ENCODE measurements at regions of chr2 and their contacts with region 1.

Region 1: DNA sequence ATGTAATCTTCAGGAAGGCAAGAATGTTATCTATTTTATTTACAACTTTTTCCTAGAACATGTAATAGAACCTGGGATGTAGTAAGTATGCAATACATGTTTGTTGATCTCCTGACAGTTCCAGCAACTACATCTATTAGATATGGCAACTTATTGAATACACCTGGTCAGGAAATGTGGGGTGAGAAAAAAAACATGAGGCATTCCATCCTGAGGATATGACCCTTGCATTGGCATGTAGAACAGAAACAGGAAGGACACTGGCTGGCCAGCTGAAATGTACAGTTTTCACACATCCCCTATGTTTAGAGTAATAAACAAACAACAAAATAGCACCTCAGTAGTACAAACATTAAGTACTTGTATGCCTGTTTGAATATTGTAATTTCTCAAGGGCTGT is 272.6 kb upstream of the NT5C1B start:
- DNase-seq: no peak
- ATAC-seq: no peak
- H3K4me3 ChIP-seq: no peak overlapping the region
- H3K27ac ChIP-seq: no peak overlapping the region
- H3K4me1 ChIP-seq: no peaks in the 10 kb centered on the region
- H3K27me3 ChIP-seq: no peaks in the 10 kb centered on the region
- CTCF ChIP-seq: no peak

Region 2: DNA sequence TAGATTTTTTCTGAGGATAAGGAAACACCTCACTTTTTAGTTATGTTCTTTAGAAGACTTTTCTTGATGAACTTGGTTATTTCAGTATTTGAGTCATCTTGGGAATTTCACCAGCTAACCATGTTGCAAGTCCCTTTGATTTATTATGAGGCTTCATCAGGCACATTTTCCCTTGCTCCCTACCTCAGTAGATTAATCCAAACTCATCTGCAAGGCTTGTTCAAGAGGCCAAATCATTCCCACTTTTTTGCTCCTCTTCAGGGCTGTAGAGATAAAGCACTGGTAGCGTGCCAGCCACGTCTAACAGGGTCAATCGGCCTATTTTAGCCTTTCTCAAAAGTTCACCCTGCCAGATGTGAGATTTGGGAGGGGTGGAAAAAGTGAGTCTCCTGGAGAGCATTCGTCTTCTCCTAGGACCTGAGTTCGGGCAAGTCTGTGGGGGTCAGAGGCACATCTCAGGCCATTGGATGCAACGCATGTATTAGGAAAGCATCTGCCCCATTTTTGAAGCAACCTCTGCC is 421.8 kb before region 1 on chr2:
- intact Hi-C with region 1: no loop called
- DNase-seq: no peak
- ATAC-seq: no peak
- H3K4me3 ChIP-seq: no peak overlapping the region
- H3K27ac ChIP-seq: no peak overlapping the region
- H3K4me1 ChIP-seq: peaks cover 0 to 13% (median 6%) of the 10 kb centered on the region in 9 donors
- H3K27me3 ChIP-seq: no peaks in the 10 kb centered on the region
- CTCF ChIP-seq: no peak

Region 3: GRCh38 chr2:18749912-18750526 is 111.9 kb before region 1 on chr2:
- intact Hi-C with region 1: no loop called
- DNase-seq: peak in 1 of 2 donors; percentile 67
- ATAC-seq: peak in 2 of 8 donors; percentile 37 to 38
- H3K4me3 ChIP-seq: no peak overlapping the region
- H3K27ac ChIP-seq: no peak overlapping the region
- H3K4me1 ChIP-seq: peaks cover 0 to 15% (median 0%) of the 10 kb centered on the region in 9 donors
- H3K27me3 ChIP-seq: no peaks in the 10 kb centered on the region
- CTCF ChIP-seq: peak; percentile 55 to 87 (median 80)

Region 4: DNA sequence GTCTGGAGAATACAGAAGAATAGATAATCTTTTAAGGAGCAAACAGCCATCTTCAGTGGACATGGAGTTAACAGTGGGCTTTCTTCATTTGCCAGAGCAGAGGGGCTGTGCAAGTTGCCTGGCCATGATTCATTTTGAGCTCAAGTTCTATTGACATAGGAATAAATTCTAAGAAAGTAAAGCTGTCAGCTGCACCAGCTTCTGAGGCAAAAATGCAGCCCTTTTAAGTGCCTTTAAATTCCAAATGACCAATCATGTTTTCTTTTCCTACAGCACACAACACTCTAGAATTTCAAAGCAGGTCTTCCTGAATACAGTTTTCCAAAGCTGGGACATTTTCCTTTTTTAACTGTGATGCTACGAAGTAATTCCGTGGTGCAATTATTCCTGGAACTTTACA is 26.2 kb before region 1 on chr2:
- intact Hi-C with region 1: loop called in 1 of 10 experiments (anchors 1 kb)
- DNase-seq: no peak
- ATAC-seq: no peak
- H3K4me3 ChIP-seq: no peak overlapping the region
- H3K27ac ChIP-seq: no peak overlapping the region
- H3K4me1 ChIP-seq: peaks cover 6 to 30% (median 18%) of the 10 kb centered on the region in 9 donors
- H3K27me3 ChIP-seq: no peaks in the 10 kb centered on the region
- CTCF ChIP-seq: no peak

Region 5: GRCh38 chr2:18922276-18922675 is 60.3 kb after region 1 on chr2:
- intact Hi-C with region 1: no loop called
- DNase-seq: no peak
- ATAC-seq: no peak
- H3K4me3 ChIP-seq: no peak overlapping the region
- H3K27ac ChIP-seq: no peak overlapping the region
- H3K4me1 ChIP-seq: peaks cover 0 to 11% (median 0%) of the 10 kb centered on the region in 9 donors
- H3K27me3 ChIP-seq: no peaks in the 10 kb centered on the region
- CTCF ChIP-seq: no peak

Measured in heart right ventricle (tissue), 16 donors.